ENCODE measurements at regions of chr2 and their contacts with region 1.

Region 1: DNA sequence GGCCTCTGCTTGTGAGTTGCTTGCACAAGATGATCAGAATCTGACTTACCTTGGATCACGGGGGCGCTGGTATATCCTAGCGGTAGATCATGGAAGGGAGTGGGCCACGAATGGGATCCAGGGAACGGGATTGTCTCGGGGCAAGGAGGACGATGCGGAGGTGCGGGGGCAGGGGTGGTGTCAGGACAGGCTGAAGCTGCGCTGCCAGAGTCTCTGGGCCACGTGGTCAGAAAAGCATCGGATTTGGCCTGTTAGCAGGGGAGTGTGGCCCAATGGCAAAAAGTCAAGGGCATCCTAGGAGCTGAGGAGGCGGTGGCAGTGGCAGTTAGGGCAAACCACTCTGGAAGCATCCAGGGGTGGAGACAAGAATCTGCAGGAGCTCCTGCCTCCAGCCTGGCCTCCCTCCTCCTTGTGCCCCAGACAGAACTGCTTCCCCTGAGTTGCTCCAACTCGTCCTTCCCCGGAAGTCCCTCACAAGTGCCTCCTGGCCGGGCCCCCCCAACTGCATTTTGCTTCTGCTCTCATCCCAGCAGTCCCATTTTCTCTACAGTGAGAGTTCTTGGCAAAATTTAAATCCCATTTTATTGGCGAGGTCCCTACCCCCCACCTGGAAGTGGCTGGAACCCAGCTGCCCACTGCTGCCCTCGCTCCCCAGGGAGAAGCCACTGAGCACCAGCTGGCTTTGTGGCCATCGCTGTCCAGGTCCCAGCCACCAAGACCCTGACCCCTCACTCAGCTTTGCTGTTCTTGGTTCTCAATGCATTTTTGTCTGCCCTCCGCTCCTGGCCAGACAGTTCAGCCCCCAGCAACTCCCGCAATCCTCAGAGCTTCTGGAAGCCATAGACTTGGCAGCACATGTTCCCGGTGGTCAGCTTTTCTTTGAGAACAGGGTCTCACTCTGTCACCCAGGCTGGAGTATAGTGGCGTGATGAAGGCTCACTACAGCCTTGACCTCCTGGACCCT is 5.6 kb upstream of the CCDC74B start:
- DNase-seq: no peak
- ATAC-seq: no peak
- H3K4me3 ChIP-seq: no peak overlapping the region
- H3K27ac ChIP-seq: no peak overlapping the region
- H3K4me1 ChIP-seq: no peaks in the 10 kb centered on the region
- H3K27me3 ChIP-seq: no peaks in the 10 kb centered on the region
- CTCF ChIP-seq: no peak
- EP300 ChIP-seq: no peak
- POLR2A ChIP-seq: no peak
- RAD21 ChIP-seq: no peak

Region 2: DNA sequence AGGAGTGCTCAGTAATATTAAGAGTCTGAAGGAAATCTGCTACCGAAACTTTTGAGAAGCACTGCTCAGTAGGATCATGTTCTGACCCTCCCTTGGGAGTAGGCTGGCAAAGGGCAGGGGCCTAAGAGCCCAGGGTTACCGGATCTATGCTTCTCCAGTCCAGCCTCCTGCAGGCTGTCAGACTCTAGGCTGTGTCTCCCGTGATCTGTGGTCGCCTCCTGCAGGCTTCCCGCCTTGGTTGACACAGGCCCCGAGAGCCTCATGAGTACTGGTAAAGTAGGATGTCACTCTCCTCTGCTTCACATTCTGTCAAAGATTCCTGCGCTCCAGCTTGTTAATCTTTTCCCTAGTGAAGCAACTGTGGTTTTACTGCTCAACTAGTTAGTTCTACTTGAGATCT is 818.8 kb before region 1 on chr2:
- CTCF ChIA-PET with region 1: no interaction called
- POLR2A ChIA-PET with region 1: interaction called, 11 read pairs
- RAD21 ChIA-PET with region 1: no interaction called
- SMC1A ChIA-PET with region 1: no interaction called
- in situ Hi-C with region 1: no loop called
- intact Hi-C with region 1: no loop called
- DNase-seq: no peak
- ATAC-seq: no peak
- H3K4me3 ChIP-seq: no peak overlapping the region
- H3K27ac ChIP-seq: no peak overlapping the region
- H3K4me1 ChIP-seq: no peaks in the 10 kb centered on the region
- H3K27me3 ChIP-seq: no peaks in the 10 kb centered on the region
- CTCF ChIP-seq: no peak
- EP300 ChIP-seq: no peak
- POLR2A ChIP-seq: no peak
- RAD21 ChIP-seq: no peak